Cardiac septum (tissue), 1 donor: ENCODE measurements at regions of chr20 and their contacts with region 1.

Region 1: GRCh38 chr20:37384683-37385174 is 38.8 kb downstream of the SRC start:
- DNase-seq: no peak

Region 2: GRCh38 chr20:37192137-37192854 is 192.4 kb before region 1 on chr20:
- intact Hi-C with region 1: loop called (anchors 10 kb)
- DNase-seq: peak; percentile 91

Region 3: DNA sequence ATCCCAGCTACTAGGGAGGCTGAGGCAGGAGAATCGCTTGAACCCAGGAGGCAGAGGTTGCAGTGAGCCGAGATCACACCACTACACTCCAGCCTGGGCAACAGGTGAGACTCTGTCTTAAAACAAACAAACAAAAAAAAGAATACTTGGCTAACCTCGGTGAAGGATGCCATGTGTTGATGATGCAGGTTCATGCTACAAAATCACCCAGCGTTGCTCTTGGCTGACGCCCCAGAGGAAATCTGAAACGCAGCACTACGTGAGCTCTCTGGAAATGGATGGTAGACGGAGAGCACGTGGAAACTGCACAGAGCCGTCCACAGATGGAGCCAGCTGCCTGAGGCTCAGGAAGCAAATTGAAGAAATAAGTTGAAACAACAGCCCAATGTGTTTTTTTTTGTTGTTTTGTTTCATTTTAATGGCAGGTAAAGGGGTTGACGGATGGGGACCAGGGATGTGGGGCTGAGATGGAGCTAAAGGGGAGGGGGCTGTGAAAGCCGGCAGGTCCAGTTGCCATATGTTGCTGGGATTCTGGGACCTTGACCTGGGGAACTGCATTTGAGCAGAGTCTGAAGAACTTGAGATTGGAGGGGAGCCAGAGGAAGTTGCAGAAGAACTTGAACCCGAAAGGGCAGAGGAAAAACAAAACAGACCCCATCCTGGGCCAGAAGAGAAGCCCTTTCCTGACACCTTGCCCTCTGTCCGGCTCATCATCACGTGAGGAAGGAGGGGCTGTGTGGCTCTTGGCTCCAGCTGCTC is 108.1 kb before region 1 on chr20:
- intact Hi-C with region 1: loop called (anchors 2 kb)
- DNase-seq: no peak

Region 4: GRCh38 chr20:37527638-37528441 is 143.1 kb after region 1 on chr20 and contains the start of gene BLCAP:
- intact Hi-C with region 1: loop called (anchors 5 kb)
- DNase-seq: peak; percentile 94
- total RNA-seq, gene BLCAP: 89.3 TPM